Activated CD4-positive, alpha-beta T cell treated with anti-CD3 and anti-CD28 coated beads for 36 hours (primary cell): ENCODE measurements at regions of chr4 and their contacts with region 1.

Region 1: DNA sequence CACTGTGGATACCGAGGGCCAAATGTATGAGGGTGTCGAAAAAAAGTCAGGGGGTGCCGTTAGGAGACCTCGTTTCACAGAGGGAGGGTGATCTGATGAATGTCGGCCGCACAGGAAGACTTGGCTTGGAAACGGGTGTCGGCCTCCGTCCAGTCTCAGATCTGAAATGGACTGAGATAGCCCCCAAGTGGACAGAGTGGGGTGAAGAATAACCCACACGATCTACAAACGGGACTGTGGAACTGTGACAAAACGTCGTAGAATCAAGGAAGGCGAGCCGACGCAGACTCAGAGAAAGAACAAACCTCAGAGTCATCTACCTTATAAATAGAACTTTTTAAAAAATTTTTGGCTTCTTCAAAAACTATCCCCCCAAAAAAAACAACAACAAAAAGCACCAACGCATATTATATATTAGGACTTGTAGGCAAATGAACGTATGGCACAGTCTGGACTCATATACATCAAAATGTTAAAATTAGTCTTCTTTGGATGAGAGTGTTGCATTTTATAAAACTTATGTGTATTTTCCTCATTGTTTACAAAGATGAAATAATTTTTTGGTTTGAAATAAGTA is 63.8 kb upstream of the IRF2 start:
- DNase-seq: peak; percentile 69
- ATAC-seq: peak; percentile 43
- H3K4me3 Mint-ChIP-seq: peak overlapping the region; percentile 92
- H3K27ac Mint-ChIP-seq: peak overlapping the region; percentile 95
- H3K4me1 Mint-ChIP-seq: peaks cover 45% of the 10 kb centered on the region
- H3K27me3 Mint-ChIP-seq: no peaks in the 10 kb centered on the region

Region 2: GRCh38 chr4:184282251-184282713 is 255.8 kb before region 1 on chr4:
- CTCF ChIA-PET with region 1: no interaction called
- POLR2A ChIA-PET with region 1: interaction called, 3 read pairs
- intact Hi-C with region 1: loop called (anchors 1 to 2 kb)
- DNase-seq: peak; percentile 82
- ATAC-seq: peak; percentile 74
- H3K4me3 Mint-ChIP-seq: peak overlapping the region; percentile 56
- H3K27ac Mint-ChIP-seq: peak overlapping the region; percentile 93
- H3K4me1 Mint-ChIP-seq: peaks cover 65% of the 10 kb centered on the region
- H3K27me3 Mint-ChIP-seq: peaks cover 4% of the 10 kb centered on the region

Region 3: DNA sequence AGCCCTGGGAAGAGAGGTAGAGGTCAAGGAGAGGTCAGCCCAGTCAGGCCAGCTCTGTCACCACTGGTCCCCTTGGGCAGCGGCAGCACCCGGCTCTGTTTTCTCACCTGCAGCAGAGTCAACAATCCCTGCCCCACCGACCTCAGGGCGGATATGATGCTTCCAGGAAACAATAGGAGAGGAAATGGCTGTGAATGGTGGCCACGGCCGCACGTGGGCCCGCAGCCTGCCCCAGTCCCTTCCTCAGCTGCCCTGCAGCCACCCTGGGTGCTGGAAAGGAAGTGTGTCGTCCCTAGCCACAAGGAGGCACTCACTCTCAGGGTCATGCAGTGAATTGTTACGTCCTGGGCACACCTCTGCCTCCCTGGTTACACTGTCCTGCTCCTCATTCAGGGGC is 227.9 kb before region 1 on chr4:
- CTCF ChIA-PET with region 1: no interaction called
- POLR2A ChIA-PET with region 1: no interaction called
- intact Hi-C with region 1: loop called in 1 of 2 experiments (anchors 1 kb)
- DNase-seq: peak; percentile 68
- ATAC-seq: peak; percentile 74
- H3K4me3 Mint-ChIP-seq: no peak overlapping the region
- H3K27ac Mint-ChIP-seq: peak overlapping the region; percentile 55
- H3K4me1 Mint-ChIP-seq: peaks cover 50% of the 10 kb centered on the region
- H3K27me3 Mint-ChIP-seq: no peaks in the 10 kb centered on the region

Region 4: GRCh38 chr4:184457535-184458249 is 80.4 kb before region 1 on chr4:
- CTCF ChIA-PET with region 1: interaction called, 3 read pairs
- POLR2A ChIA-PET with region 1: interaction called, 4 read pairs
- intact Hi-C with region 1: loop called in 1 of 2 experiments (anchors 1 kb)
- DNase-seq: no peak
- ATAC-seq: no peak
- H3K4me3 Mint-ChIP-seq: no peak overlapping the region
- H3K27ac Mint-ChIP-seq: no peak overlapping the region
- H3K4me1 Mint-ChIP-seq: peaks cover 78% of the 10 kb centered on the region
- H3K27me3 Mint-ChIP-seq: no peaks in the 10 kb centered on the region

Region 5: DNA sequence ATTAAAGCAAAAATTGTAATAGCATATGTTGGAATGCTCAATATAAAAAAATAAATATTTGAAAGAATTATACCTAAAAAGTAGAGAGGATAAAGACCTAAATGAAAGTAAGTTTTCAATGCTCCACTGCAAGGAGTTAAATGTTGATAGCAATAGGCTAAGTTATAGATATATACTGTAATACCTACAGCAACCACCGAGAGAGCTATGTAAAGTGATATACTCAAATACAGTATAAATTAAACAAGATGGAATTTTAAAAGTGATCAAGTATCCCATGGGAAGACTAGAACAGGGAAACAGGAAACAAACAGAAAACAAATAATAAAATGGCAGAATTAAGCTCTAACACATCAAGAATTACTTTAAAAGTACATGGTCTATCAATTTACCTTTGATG is 37.2 kb after region 1 on chr4:
- CTCF ChIA-PET with region 1: interaction called, 4 read pairs
- POLR2A ChIA-PET with region 1: no interaction called
- intact Hi-C with region 1: loop called in 1 of 2 experiments (anchors 2 kb)
- DNase-seq: no peak
- ATAC-seq: peak; percentile 67
- H3K4me3 Mint-ChIP-seq: no peak overlapping the region
- H3K27ac Mint-ChIP-seq: peak overlapping the region; percentile 47
- H3K4me1 Mint-ChIP-seq: peaks cover 22% of the 10 kb centered on the region
- H3K27me3 Mint-ChIP-seq: no peaks in the 10 kb centered on the region

Region 6: DNA sequence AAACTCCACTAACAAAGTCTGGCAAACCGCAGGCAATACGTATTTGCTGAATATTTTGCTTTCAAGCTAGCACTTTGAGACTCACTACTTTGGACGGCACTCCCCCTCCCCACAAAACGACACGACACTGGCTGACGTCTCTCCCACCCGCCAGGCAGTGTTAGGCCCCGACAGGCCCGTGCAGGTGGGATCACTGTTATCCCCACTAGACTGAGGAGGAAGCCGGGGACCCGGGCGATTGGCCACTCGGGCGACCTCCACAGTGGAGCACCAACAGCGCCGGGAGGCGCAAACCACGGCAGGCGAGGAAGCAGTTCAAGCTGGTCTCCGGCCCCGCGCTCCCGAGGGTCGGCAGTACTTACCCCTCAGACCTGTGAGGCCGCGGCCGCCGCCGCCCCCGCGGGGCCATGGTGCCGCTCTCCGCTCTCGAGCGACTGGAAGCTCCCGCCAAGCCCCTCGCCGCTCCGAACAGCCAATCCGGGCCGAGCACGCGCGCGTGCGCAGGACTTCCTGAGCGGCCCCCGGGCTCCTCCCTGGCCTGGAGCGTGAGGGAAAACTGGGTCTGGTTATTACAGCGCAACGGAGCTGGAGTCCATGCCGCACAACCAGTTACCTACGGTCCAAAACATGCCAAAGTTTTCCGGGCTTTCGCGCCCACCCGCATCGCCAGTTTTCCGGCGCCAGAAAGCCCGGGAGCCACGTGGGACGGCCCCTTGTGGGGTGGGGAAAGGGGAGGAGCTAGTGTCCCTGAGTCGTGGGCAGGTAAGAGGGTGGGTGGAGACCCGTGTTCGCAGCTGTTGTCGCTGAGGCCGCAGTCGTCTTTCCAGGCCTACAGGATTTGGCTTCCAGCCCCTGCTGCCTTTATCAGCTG is 195.8 kb after region 1 on chr4 and contains the start of gene CENPU:
- CTCF ChIA-PET with region 1: no interaction called
- POLR2A ChIA-PET with region 1: interaction called, 8 read pairs
- intact Hi-C with region 1: loop called (anchors 1 kb)
- DNase-seq: peak; percentile 98
- ATAC-seq: peak; percentile 95
- H3K4me3 Mint-ChIP-seq: peak within 1 kb of the TSS; percentile 98
- H3K27ac Mint-ChIP-seq: peak within 1 kb of the TSS; percentile 94
- H3K4me1 Mint-ChIP-seq: peaks cover 24% of the 10 kb centered on the region
- H3K27me3 Mint-ChIP-seq: no peaks in the 10 kb centered on the region
- total RNA-seq, gene CENPU: 87.7 to 88.4 TPM

Region 7: GRCh38 chr4:185405296-185405999 is 867.3 kb after region 1 on chr4:
- CTCF ChIA-PET with region 1: no interaction called
- POLR2A ChIA-PET with region 1: no interaction called
- intact Hi-C with region 1: no loop called
- DNase-seq: no peak
- ATAC-seq: peak; percentile 49
- H3K4me3 Mint-ChIP-seq: no peak overlapping the region
- H3K27ac Mint-ChIP-seq: peak overlapping the region; percentile 31
- H3K4me1 Mint-ChIP-seq: peaks cover 8% of the 10 kb centered on the region
- H3K27me3 Mint-ChIP-seq: no peaks in the 10 kb centered on the region